Gastrocnemius medialis (tissue), 4 donors: ENCODE measurements at regions of chr11 and their contacts with region 1.

Region 1: DNA sequence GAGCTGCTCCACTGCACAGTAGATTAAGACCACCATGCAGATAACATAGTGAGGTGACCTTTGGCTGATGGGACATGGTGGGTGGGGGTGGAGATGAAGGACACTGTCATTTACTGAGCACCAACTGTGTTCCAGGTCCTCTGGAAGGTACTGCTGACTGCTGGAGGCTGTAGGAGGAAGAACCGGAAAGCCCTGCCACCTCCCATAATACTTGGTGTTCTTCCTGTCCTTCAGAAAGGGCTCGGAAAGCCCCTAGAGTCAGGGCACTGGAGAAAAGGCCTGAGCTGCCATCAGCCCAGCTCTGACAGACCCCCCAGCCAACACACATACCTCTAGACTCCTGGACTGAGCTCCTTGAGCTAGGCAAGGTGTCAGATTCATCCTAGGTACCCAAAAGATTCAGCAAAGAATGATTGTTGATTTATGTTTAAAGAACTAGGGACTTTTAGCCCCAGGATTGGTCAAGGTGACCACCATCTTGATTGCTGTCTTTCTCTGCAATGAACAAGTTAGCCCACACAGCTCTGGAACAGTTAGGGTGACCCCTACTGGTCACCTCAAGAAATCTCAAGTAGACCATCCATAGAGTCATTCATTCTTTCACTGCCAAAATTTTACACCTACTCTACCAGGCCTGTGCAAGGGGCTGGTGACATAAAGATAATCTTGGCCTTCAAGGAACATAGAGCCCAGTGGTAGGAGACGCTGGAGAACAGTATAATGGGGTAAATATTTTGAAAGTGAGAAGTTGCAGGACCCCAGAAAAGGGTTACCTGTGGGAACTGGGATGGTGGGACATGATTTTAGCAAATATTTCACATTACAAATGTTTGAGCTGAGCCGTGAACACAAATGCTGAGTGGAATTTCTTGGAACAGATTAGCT is 39.4 kb downstream of the IRAG1 start:
- DNase-seq: no peak
- ATAC-seq: peak; percentile 65 to 88
- H3K4me3 ChIP-seq: no peak overlapping the region
- H3K27ac ChIP-seq: peak overlapping the region in 3 of 4 donors; percentile 9 to 51 (median 36)
- H3K4me1 ChIP-seq: peaks cover 16 to 39% of the 10 kb centered on the region in 2 donors
- H3K27me3 ChIP-seq: no peaks in the 10 kb centered on the region
- CTCF ChIP-seq: peak; percentile 62 to 79 (median 69)
- POLR2A ChIP-seq: no peak

Region 2: DNA sequence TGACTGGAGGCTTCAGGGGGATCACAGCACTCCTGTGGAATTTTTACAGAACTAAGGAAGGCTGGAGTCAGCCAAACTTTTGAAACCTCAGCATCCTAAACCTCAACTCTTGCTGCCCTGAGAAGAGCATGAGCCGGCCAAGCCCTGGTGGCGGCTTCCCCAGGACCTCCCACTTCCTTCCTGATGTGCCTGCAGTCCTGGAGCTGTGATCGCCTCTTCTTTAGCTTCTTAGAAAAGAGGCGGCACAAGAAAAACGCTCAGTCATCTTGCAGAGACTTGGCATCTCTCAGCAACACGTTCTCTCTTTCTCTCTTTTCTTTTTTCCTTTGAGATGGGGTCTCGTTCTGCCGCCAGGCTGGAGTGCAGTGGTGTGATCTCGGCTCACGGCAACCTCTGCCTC is 239.5 kb before region 1 on chr11:
- in situ Hi-C with region 1: loop called in 1 of 4 experiments (anchors 10 kb)
- intact Hi-C with region 1: loop called (anchors 1 kb)
- DNase-seq: peak in 1 of 2 donors; percentile 60
- ATAC-seq: no peak
- H3K4me3 ChIP-seq: no peak overlapping the region
- H3K27ac ChIP-seq: peak overlapping the region in 1 of 4 donors; percentile 41
- H3K4me1 ChIP-seq: peaks cover 21% of the 10 kb centered on the region in 2 donors
- H3K27me3 ChIP-seq: no peaks in the 10 kb centered on the region
- CTCF ChIP-seq: no peak
- POLR2A ChIP-seq: no peak

Region 3: DNA sequence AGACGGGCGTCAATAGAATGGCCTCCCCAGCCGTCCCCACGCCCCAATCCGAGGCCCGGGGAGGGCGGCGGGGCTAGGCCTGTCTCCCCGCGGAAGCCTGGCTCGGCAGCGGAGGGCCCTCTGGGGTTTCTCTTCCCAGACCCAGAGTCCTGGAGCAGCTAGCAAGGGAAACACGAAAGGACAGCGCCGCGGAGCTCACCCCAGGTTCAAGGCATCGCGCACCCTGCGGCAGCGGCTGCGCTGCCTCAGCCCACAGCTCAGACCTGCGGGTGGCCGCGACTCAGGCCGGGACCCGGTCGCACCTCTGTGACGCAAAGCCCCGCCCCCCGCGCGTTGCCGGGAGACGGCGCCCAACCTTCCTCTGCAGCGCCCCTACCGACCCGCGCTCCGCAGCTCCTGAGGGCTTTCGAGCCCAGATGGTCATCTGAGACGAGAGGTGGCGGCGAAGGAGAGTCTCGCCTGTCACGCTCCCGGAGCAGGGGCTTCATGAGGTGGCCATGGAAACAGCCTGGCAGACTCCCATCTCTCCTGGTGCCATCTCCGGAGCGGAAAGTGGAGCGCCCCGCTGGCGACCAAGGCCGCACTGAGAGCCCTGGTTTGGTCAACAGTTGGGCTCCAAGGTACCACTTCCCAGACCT is 113.1 kb before region 1 on chr11 and contains the start of gene RNF141:
- in situ Hi-C with region 1: loop called in 1 of 4 experiments (anchors 25 kb)
- intact Hi-C with region 1: loop called (anchors 5 kb)
- DNase-seq: peak; percentile 91 to 93
- ATAC-seq: peak; percentile 90 to 93
- H3K4me3 ChIP-seq: peak within 1 kb of the TSS; percentile 89 to 93 (median 92)
- H3K27ac ChIP-seq: peak within 1 kb of the TSS; percentile 91 to 97 (median 94)
- H3K4me1 ChIP-seq: peaks cover 8 to 13% of the 10 kb centered on the region in 2 donors
- H3K27me3 ChIP-seq: no peaks in the 10 kb centered on the region
- CTCF ChIP-seq: peak; percentile 82 to 88 (median 83)
- POLR2A ChIP-seq: peak; percentile 80 to 93
- total RNA-seq, gene RNF141: 16.8 to 38.2 (median 19.0) TPM

Region 4: GRCh38 chr11:10573556-10573955 is 80.6 kb before region 1 on chr11:
- in situ Hi-C with region 1: no loop called
- intact Hi-C with region 1: loop called (anchors 5 kb)
- DNase-seq: no peak
- ATAC-seq: no peak
- H3K4me3 ChIP-seq: no peak overlapping the region
- H3K27ac ChIP-seq: peak overlapping the region; percentile 46 to 82 (median 64)
- H3K4me1 ChIP-seq: peaks cover 22 to 47% of the 10 kb centered on the region in 2 donors
- H3K27me3 ChIP-seq: no peaks in the 10 kb centered on the region
- CTCF ChIP-seq: no peak
- POLR2A ChIP-seq: no peak